ENCODE measurements at regions of chr14 and their contacts with region 1.

Region 1: GRCh38 chr14:33908540-33909223 is 42.2 kb downstream of the EGLN3 start:
- DNase-seq: no peak
- H3K4me3 ChIP-seq: no peak overlapping the region
- H3K27ac ChIP-seq: no peak overlapping the region
- H3K4me1 ChIP-seq: no peaks in the 10 kb centered on the region; a peak in 1 of 7 replicates
- H3K27me3 ChIP-seq: no peaks in the 10 kb centered on the region
- CTCF ChIP-seq: peak; percentile 48 to 62 (median 52)
- EP300 ChIP-seq: no peak
- POLR2A ChIP-seq: no peak
- RAD21 ChIP-seq: peak; percentile 65

Region 2: GRCh38 chr14:33676135-33676566 is 232.5 kb before region 1 on chr14:
- CTCF ChIA-PET with region 1: no interaction called
- POLR2A ChIA-PET with region 1: no interaction called
- DNase-seq: peak; percentile 36 to 73
- H3K4me3 ChIP-seq: no peak overlapping the region
- H3K27ac ChIP-seq: no peak overlapping the region
- H3K4me1 ChIP-seq: no peaks in the 10 kb centered on the region
- H3K27me3 ChIP-seq: no peaks in the 10 kb centered on the region
- CTCF ChIP-seq: peak; percentile 56 to 73 (median 69)
- EP300 ChIP-seq: no peak
- POLR2A ChIP-seq: no peak
- RAD21 ChIP-seq: peak; percentile 82 to 90

Region 3: GRCh38 chr14:33922125-33922524 is 13.4 kb after region 1 on chr14:
- CTCF ChIA-PET with region 1: interaction called, 12 read pairs
- POLR2A ChIA-PET with region 1: no interaction called
- DNase-seq: no peak
- H3K4me3 ChIP-seq: no peak overlapping the region
- H3K27ac ChIP-seq: no peak overlapping the region
- H3K4me1 ChIP-seq: peaks cover 0 to 6% (median 3%) of the 10 kb centered on the region in 4 experiments; a peak in 4 of 7 replicates
- H3K27me3 ChIP-seq: no peaks in the 10 kb centered on the region
- CTCF ChIP-seq: no peak
- EP300 ChIP-seq: no peak
- POLR2A ChIP-seq: no peak
- RAD21 ChIP-seq: no peak

Measured in H1 (cell line).